ENCODE measurements at regions of chr15 and their contacts with region 1.

Region 1: GRCh38 chr15:81106560-81106959 is 27.5 kb upstream of the CFAP161 start:
- DNase-seq: peak in 4 of 10 donors; percentile 43 to 62 (median 55)
- H3K4me3 ChIP-seq: no peak overlapping the region
- H3K27ac ChIP-seq: no peak overlapping the region
- H3K27me3 ChIP-seq: no peaks in the 10 kb centered on the region
- CTCF ChIP-seq: peak; percentile 62 to 89 (median 81)

Region 2: GRCh38 chr15:80977627-80978036 is 128.9 kb before region 1 on chr15:
- intact Hi-C with region 1: loop called (anchors 2 to 5 kb)
- DNase-seq: peak; percentile 60 to 78 (median 66)
- H3K4me3 ChIP-seq: no peak overlapping the region
- H3K27ac ChIP-seq: peak overlapping the region in 1 of 59 donors; percentile 10
- H3K27me3 ChIP-seq: no peaks in the 10 kb centered on the region
- CTCF ChIP-seq: peak in 55 of 56 donors; percentile 37 to 88 (median 67)

Region 3: DNA sequence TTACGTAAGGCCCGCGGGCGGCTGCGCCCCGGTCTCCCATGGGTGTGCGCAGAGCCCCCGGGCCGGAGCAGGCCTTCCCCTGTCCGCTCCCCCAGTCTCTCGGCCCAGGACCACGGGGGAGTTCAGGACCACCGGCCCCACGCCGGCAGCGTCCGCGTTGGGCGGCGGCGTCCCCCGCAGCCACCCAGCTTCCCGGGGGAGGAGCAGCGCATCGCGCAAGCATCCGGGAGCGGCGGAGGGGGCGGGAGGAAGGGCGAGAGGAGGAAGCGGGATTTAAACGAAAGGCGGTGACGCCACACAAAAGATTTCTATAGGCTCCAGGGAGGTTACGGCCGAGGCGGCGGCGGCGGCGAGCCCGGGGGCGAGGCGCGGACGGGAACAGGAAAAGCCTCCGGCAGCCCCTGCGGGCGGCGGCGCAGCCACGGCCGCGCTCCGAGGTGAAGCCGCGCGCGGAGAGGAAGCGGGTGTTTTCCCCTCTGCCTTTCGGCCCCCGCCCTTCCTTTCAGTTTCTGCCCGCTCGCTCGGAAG is 105.9 kb before region 1 on chr15 and contains the start of gene TLNRD1:
- intact Hi-C with region 1: loop called (anchors 5 to 10 kb)
- DNase-seq: peak; percentile 56 to 93 (median 84)
- H3K4me3 ChIP-seq: peak within 1 kb of the TSS; percentile 60 to 95 (median 87)
- H3K27ac ChIP-seq: peak within 1 kb of the TSS; percentile 78 to 99 (median 97)
- H3K27me3 ChIP-seq: no peaks in the 10 kb centered on the region
- CTCF ChIP-seq: peak in 9 of 56 donors; percentile 8 to 30 (median 15)
- total RNA-seq, gene TLNRD1: 10.3 to 20.4 (median 16.1) TPM

Region 4: DNA sequence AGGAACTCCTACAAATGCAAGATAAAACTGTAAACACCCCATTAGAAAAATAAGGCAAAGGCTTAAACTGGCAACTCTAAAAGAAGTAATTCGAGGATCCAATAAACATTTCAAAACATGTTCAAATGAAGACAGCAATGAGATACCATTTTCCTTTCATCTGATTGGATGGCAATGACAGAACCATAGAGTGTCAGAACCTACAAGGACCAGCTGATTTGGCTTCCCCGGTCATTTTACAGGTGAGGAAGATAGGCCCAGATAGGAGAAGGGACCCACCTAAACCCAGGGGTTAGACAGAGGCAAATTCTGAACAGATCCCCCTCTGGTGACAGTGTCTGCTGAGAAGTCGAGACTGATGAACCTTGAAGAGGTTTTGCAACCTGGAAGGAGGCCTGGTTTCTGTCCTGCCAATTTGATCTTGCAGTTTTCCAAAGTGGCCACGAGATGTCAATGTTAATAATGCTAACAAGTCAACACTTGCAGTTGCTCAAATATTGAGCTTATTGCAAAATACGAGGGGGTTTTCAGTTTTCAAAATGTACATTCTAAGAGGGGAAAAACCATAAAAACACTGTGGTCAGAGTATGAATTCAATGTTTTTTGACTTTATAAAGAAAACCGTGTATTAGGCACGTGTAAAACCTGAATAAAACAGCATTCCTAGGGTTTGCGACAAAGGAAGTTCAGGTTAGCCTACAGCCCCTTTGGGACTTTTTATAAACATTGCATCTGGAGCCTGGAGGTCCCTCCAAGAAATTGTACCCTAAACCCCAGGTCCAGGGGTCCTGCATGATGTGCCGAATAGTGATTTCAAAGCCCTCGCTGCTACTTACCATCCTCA is 49.0 kb after region 1 on chr15:
- intact Hi-C with region 1: loop called in 1 of 2 experiments (anchors 5 kb)
- DNase-seq: peak in 1 of 10 donors; percentile 64
- H3K4me3 ChIP-seq: no peak overlapping the region
- H3K27ac ChIP-seq: no peak overlapping the region
- H3K27me3 ChIP-seq: peaks cover 0 to 5% (median 0%) of the 10 kb centered on the region in 45 donors
- CTCF ChIP-seq: peak in 55 of 56 donors; percentile 44 to 86 (median 67)

Region 5: DNA sequence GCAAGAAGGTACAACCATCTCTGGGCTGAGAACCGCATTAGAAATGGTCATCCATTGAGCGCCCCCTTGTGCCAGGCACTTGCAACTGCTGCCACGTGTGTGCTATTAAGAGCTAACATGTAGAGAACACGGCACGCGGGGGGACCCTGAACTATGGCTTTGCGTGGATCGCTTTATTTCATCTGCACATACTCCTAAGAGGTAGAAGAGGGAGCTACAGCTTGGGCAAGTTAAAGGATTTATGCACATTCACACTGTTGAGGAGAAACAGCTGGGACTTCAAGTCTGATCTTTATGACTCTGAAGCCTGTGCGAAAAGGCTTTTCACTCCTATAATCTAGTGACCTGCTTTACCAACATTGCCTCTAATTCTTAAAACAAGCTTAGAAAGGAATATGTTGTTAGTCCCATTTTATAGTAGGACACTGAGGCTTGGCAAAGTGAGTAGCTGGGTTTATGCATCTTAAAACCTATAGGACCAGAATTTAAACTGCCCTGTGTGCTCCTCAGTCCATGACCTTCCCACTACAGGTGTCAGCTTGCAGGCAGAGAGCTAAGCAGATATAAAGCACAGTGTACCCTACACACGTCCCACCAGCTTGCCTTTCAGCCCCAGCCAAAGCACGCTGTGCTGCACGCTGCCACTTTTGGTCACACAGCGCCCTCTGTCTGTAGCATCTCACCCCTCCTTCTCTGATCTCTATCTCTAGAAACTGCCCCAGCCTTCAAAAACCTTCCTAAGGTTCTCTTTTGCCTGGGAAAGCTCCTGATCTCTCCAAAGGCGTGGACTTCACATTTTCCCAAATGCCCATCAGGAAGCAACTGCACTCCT is 159.6 kb after region 1 on chr15:
- intact Hi-C with region 1: loop called (anchors 2 kb)
- DNase-seq: peak; percentile 71 to 88 (median 83)
- H3K4me3 ChIP-seq: peak overlapping the region in 27 of 59 donors; percentile 0 to 46 (median 22)
- H3K27ac ChIP-seq: no peak overlapping the region
- H3K27me3 ChIP-seq: peaks cover 0 to 5% (median 0%) of the 10 kb centered on the region in 45 donors
- CTCF ChIP-seq: peak; percentile 63 to 92 (median 80)

Region 6: DNA sequence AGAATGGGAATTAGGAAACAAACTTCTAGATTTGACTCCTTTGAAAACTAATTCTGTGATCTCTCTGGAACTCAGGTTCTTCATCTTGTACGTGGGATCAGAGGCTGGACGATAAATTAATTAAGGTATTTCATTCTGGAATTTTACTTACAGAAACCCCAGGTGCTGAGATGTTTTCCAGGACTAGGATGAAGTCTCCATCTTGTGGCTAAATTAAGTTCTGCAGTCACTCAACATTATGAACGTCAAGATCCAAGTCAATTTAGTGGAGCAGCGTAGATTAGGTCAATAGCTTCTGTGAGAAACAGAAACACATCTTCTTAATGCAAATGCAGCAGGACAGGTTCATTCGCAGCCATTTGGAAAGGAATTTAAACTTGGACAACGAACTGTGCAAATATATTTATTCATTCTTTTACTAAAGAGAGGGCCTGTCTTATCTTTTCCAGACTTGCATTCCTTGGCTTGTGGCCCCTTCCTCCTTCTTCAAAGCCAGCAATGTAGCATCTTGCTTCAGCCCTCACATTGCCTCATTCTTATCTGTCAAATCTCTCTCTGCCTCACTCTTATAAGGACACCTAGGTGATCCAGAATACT is 294.2 kb after region 1 on chr15:
- intact Hi-C with region 1: loop called in 1 of 2 experiments (anchors 10 kb)
- DNase-seq: peak in 1 of 10 donors; percentile 6
- H3K4me3 ChIP-seq: no peak overlapping the region
- H3K27ac ChIP-seq: no peak overlapping the region
- H3K27me3 ChIP-seq: no peaks in the 10 kb centered on the region
- CTCF ChIP-seq: peak; percentile 48 to 82 (median 70)